ENCODE measurements at regions of chr5 and their contacts with region 1.

Region 1: DNA sequence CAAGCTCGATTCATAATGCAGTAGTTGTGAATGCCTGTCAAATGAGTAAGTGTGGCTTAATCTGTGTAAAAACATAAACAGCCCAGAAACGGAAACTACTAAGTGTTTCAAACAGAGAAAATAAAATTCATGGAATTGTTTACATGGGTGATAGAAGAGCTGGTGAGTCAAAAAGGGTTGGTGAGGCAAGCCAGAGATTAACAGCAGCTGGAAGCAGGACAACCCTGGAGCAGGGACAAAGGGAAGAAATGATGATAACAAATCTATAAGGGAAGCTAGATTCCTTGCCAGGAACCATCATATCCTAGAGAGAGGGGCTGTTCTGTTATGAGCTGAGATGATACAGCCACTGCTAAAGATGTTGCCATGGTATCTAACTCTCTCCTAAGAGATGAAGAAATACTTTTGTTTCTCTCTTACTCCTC is 18.0 kb upstream of the PRR16 start:
- DNase-seq: peak; percentile 96
- H3K4me3 ChIP-seq: no peak overlapping the region
- H3K27ac ChIP-seq: peak overlapping the region; percentile 86
- H3K4me1 ChIP-seq: peaks cover 29% of the 10 kb centered on the region
- H3K27me3 ChIP-seq: no peaks in the 10 kb centered on the region
- CTCF ChIP-seq: no peak
- POLR2A ChIP-seq: no peak

Region 2: DNA sequence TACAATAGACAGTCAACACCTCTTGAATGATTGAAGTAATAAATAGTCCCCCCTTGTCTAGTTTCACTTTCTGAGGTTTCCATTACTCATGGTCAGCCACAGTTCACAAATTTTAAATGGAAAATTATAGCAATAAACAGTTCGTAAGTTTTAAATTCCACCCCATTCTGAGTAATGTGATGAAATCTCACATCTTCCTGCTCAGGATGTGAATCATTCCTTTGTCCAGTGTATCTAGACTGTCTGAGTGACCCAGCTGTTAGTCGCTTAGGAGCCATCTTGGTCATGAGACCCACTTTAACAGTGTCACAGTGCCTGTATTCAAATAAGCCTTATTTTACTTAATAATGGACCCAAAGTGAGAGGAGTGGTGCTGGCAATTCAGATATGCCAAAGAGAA is 293.6 kb before region 1 on chr5:
- CTCF ChIA-PET with region 1: no interaction called
- POLR2A ChIA-PET with region 1: no interaction called
- dilution Hi-C with region 1: no loop called
- intact Hi-C with region 1: loop called (anchors 1 kb)
- DNase-seq: peak; percentile 91
- H3K4me3 ChIP-seq: no peak overlapping the region
- H3K27ac ChIP-seq: peak overlapping the region; percentile 88
- H3K4me1 ChIP-seq: peaks cover 10% of the 10 kb centered on the region
- H3K27me3 ChIP-seq: no peaks in the 10 kb centered on the region
- CTCF ChIP-seq: no peak
- POLR2A ChIP-seq: no peak

Region 3: DNA sequence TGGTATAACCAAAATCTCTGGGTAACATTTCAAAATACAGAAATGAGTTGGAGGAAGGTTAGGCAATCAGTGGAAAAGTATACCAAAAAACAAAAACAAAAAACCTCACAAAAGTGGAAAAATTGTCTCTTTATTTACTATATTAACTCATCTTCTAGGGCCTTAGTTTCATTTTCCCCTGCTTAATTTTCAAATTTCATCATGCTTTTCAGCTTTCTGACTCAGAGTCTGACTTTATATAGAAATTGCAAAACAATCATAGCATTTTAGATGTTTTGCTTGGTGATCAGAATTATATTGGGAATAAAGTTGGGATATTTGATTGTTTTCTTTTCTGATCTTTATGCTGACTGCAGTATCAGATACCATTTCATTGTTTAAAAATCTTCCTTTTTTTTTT is 239.0 kb before region 1 on chr5:
- CTCF ChIA-PET with region 1: no interaction called
- POLR2A ChIA-PET with region 1: no interaction called
- dilution Hi-C with region 1: no loop called
- intact Hi-C with region 1: no loop called
- DNase-seq: no peak
- H3K4me3 ChIP-seq: no peak overlapping the region
- H3K27ac ChIP-seq: no peak overlapping the region
- H3K4me1 ChIP-seq: no peaks in the 10 kb centered on the region
- H3K27me3 ChIP-seq: no peaks in the 10 kb centered on the region
- CTCF ChIP-seq: no peak
- POLR2A ChIP-seq: no peak

Region 4: GRCh38 chr5:120388016-120388781 is 57.9 kb before region 1 on chr5:
- CTCF ChIA-PET with region 1: interaction called, 12 read pairs
- POLR2A ChIA-PET with region 1: interaction called, 6 read pairs
- dilution Hi-C with region 1: no loop called
- intact Hi-C with region 1: loop called (anchors 1 kb)
- DNase-seq: peak; percentile 57
- H3K4me3 ChIP-seq: no peak overlapping the region
- H3K27ac ChIP-seq: no peak overlapping the region
- H3K4me1 ChIP-seq: peaks cover 12% of the 10 kb centered on the region
- H3K27me3 ChIP-seq: no peaks in the 10 kb centered on the region
- CTCF ChIP-seq: no peak
- POLR2A ChIP-seq: no peak

Region 5: GRCh38 chr5:120413706-120414105 is 32.4 kb before region 1 on chr5:
- CTCF ChIA-PET with region 1: interaction called, 5 read pairs
- POLR2A ChIA-PET with region 1: no interaction called
- dilution Hi-C with region 1: no loop called
- intact Hi-C with region 1: loop called (anchors 1 kb)
- DNase-seq: peak; percentile 29
- H3K4me3 ChIP-seq: no peak overlapping the region
- H3K27ac ChIP-seq: no peak overlapping the region
- H3K4me1 ChIP-seq: peaks cover 2% of the 10 kb centered on the region
- H3K27me3 ChIP-seq: no peaks in the 10 kb centered on the region
- CTCF ChIP-seq: no peak
- POLR2A ChIP-seq: no peak

Region 6: GRCh38 chr5:121006217-121006616 is 560.1 kb after region 1 on chr5:
- CTCF ChIA-PET with region 1: no interaction called
- POLR2A ChIA-PET with region 1: no interaction called
- dilution Hi-C with region 1: no loop called
- intact Hi-C with region 1: loop called (anchors 5 kb)
- DNase-seq: no peak
- H3K4me3 ChIP-seq: no peak overlapping the region
- H3K27ac ChIP-seq: no peak overlapping the region
- H3K4me1 ChIP-seq: peaks cover 10% of the 10 kb centered on the region
- H3K27me3 ChIP-seq: no peaks in the 10 kb centered on the region
- CTCF ChIP-seq: no peak
- POLR2A ChIP-seq: no peak

Measured in endothelial cell of umbilical vein (primary cell).